ENCODE measurements at regions of chr17 and their contacts with region 1.

Region 1: GRCh38 chr17:29732613-29733012 is 109.9 kb upstream of the CORO6 start:
- DNase-seq: peak; percentile 86
- H3K4me3 ChIP-seq: no peak overlapping the region
- H3K27ac ChIP-seq: peak overlapping the region; percentile 94
- H3K4me1 ChIP-seq: peaks cover 12% of the 10 kb centered on the region
- H3K27me3 ChIP-seq: no peaks in the 10 kb centered on the region
- CTCF ChIP-seq: no peak

Region 2: GRCh38 chr17:29710891-29711418 is 21.7 kb before region 1 on chr17:
- CTCF ChIA-PET with region 1: no interaction called
- dilution Hi-C with region 1: no loop called
- in situ Hi-C with region 1: no loop called
- intact Hi-C with region 1: loop called (anchors 1 kb)
- DNase-seq: peak; percentile 95
- H3K4me3 ChIP-seq: no peak overlapping the region
- H3K27ac ChIP-seq: peak overlapping the region; percentile 38
- H3K4me1 ChIP-seq: peaks cover 27% of the 10 kb centered on the region
- H3K27me3 ChIP-seq: no peaks in the 10 kb centered on the region
- CTCF ChIP-seq: no peak

Region 3: DNA sequence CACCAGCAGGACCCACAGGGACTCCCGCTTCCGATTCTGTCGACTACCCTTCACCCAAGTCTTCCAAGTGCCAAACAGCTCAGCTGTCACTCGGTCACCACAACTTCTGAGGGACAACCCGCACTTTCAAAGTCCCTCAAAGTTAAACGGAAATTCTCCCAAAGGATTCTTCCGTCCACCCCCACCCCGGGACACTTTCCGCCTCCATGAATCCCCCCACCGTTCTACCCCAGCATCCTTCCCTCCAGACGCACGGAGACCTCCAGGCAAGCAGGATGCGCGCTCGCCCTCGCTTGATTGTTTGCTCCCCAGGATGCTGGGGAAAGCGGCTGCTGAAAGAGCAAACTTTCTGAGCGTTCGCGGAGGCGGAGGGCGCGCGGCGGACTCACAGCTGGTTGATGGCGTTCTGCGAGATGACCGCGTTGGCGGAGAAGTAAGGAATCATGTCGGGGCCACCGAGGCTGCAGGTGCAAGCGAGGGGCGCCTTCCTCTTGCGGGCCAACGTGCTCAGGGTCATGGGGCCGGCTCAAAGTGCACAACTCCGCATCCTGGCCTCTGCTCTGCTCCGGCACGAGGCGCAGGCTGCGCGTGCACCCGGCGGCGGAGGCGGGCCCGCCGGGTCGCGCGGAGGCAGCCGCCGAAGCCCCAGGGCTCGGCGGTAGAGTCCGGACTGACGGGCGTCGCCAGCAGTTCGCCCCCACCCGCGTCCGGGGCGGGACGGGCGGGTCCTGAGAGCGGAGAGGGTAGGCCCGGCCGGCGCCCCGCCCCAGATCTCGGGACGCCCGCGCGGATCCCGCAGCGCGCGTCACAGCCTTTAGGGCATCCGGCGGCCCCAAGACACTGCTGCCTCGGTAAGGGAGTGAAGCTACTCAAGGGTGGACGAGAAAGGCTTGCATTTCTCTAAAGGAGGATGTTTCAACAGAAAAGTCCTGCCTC is 28.4 kb after region 1 on chr17:
- CTCF ChIA-PET with region 1: no interaction called
- dilution Hi-C with region 1: no loop called
- in situ Hi-C with region 1: no loop called
- intact Hi-C with region 1: loop called (anchors 1 kb)
- DNase-seq: peak; percentile 82
- H3K4me3 ChIP-seq: peak overlapping the region; percentile 81 to 89 (median 85)
- H3K27ac ChIP-seq: peak overlapping the region; percentile 53
- H3K4me1 ChIP-seq: peaks cover 11% of the 10 kb centered on the region
- H3K27me3 ChIP-seq: no peaks in the 10 kb centered on the region
- CTCF ChIP-seq: no peak

Measured in mammary epithelial cell (primary cell).